Heart left ventricle (tissue), 16 donors: ENCODE measurements at regions of chr17 and their contacts with region 1.

Region 1: GRCh38 chr17:64155751-64156544 is 26.0 kb upstream of the ERN1 start:
- DNase-seq: peak; percentile 72 to 89 (median 84)
- ATAC-seq: peak; percentile 89 to 95 (median 93)
- H3K4me3 ChIP-seq: peak overlapping the region in 2 of 12 donors; percentile 25 to 35
- H3K27ac ChIP-seq: peak overlapping the region; percentile 87 to 97 (median 93)
- H3K4me1 ChIP-seq: peaks cover 34 to 86% (median 76%) of the 10 kb centered on the region in 12 donors
- H3K27me3 ChIP-seq: no peaks in the 10 kb centered on the region
- CTCF ChIP-seq: peak in 3 of 12 donors; percentile 11 to 23 (median 19)
- POLR2A ChIP-seq: peak in 1 of 2 donors; percentile 46

Region 2: DNA sequence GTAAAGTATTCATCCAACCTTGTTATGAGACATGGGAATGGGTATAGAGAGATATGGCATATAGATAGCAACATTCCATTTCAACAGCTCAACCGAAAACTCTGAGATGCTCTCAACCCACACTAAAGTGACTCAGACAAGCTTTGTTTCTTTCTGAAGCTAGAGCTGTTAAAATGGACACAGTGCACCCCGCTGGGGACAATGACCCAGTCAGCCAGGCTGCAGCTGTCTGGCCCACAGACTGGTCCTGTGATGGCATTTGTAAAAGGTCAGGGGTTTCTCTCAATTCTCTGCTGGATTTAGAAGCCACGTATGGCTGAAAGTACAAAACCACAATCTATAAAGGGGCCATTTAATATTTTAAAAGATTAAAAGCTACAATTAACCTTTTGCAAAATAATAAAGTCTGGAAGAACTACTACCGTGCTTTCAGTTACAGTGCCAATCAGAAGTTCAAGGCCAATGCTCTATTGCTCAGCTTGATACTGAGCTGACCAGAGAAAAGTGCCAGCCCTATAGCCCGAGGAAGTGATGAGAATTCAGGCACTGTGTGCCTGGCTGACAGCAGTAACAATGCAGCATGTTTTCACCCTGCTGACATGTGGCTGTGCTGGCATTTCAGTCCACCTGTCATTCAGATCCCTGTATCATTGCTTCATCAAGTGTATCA is 46.9 kb after region 1 on chr17:
- intact Hi-C with region 1: loop called in 1 of 10 experiments (anchors 10 kb)
- DNase-seq: no peak
- ATAC-seq: peak; percentile 62 to 86 (median 66)
- H3K4me3 ChIP-seq: no peak overlapping the region
- H3K27ac ChIP-seq: peak overlapping the region in 10 of 12 donors; percentile 14 to 68 (median 45)
- H3K4me1 ChIP-seq: peaks cover 0 to 60% (median 36%) of the 10 kb centered on the region in 12 donors
- H3K27me3 ChIP-seq: no peaks in the 10 kb centered on the region
- CTCF ChIP-seq: no peak
- POLR2A ChIP-seq: no peak

Region 3: DNA sequence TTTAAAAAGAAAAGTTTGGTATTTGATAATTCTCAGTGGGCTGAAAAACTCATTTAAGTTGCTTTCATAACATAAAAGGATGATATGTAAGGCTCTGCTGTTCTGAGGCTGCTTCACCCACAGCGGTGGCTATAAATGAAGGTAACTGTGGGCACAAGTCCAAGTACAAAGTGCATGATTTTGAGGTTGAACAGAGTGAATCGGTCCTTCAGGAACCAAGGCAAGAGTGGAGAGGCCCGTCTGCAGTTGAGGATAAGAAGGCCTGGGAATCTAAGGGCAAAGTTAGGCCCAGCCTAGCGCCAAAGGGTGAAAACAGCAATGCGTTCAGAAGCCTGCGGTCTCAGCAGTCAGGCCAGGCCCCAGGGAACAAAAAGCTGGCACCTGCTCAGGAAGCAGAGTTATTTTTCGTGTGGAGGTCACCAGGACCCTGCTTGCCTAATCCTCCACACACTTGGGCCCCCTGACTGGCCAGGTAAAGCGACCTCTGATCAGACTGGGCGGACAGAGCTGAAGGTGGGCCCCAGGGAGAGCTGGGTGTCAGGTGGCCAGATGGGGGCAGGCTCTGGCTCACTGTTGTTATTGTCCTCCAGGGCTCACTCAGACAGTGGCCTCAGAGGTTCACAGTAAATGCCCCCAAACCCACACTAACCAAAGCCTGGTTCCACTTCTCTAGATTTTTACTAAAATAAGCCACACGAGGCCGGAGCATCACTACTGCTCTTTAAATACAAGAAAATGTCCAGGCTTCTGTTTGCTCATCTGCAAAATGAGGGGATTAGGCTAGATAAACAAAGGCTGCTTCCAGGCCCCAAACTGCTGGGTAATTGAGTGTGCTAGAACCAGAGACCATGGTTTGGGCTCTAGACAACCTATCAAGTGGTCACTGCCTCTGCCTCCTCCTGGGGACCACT is 60.6 kb after region 1 on chr17:
- intact Hi-C with region 1: loop called in 1 of 10 experiments (anchors 10 kb)
- DNase-seq: peak; percentile 37 to 64 (median 58)
- ATAC-seq: peak; percentile 62 to 78 (median 73)
- H3K4me3 ChIP-seq: no peak overlapping the region
- H3K27ac ChIP-seq: peak overlapping the region; percentile 47 to 85 (median 74)
- H3K4me1 ChIP-seq: peaks cover 10 to 62% (median 41%) of the 10 kb centered on the region in 12 donors
- H3K27me3 ChIP-seq: no peaks in the 10 kb centered on the region
- CTCF ChIP-seq: peak in 4 of 12 donors; percentile 9 to 32 (median 24)
- POLR2A ChIP-seq: no peak

Region 4: GRCh38 chr17:64262417-64263260 is 106.7 kb after region 1 on chr17 and contains the start of gene TEX2:
- intact Hi-C with region 1: loop called in 2 of 10 experiments (anchors 1 to 5 kb)
- DNase-seq: peak; percentile 56 to 81 (median 67)
- ATAC-seq: peak; percentile 30 to 70 (median 64)
- H3K4me3 ChIP-seq: peak within 1 kb of the TSS; percentile 86 to 100 (median 96)
- H3K27ac ChIP-seq: peak within 1 kb of the TSS; percentile 62 to 97 (median 93)
- H3K4me1 ChIP-seq: peaks cover 4 to 50% (median 33%) of the 10 kb centered on the region in 12 donors
- H3K27me3 ChIP-seq: no peaks in the 10 kb centered on the region
- CTCF ChIP-seq: no peak
- POLR2A ChIP-seq: peak; percentile 21 to 65
- total RNA-seq, gene TEX2: 42.2 to 55.8 (median 51.1) TPM

Region 5: GRCh38 chr17:64506576-64507477 is 350.9 kb after region 1 on chr17 and contains the start of gene CEP95:
- intact Hi-C with region 1: loop called in 1 of 10 experiments (anchors 10 kb)
- DNase-seq: peak; percentile 96 to 97 (median 96)
- ATAC-seq: peak; percentile 82 to 89 (median 84)
- H3K4me3 ChIP-seq: peak within 1 kb of the TSS; percentile 77 to 99 (median 88)
- H3K27ac ChIP-seq: peak within 1 kb of the TSS; percentile 96 to 100 (median 99)
- H3K4me1 ChIP-seq: peaks cover 14 to 53% (median 49%) of the 10 kb centered on the region in 12 donors
- H3K27me3 ChIP-seq: no peaks in the 10 kb centered on the region
- CTCF ChIP-seq: no peak
- POLR2A ChIP-seq: peak in 1 of 2 donors; percentile 41
- total RNA-seq, gene CEP95: 9.4 to 25.1 (median 13.1) TPM